A673 (cell line): ENCODE measurements at regions of chr12 and their contacts with region 1.

Region 1: GRCh38 chr12:31406345-31406744 is 80.4 kb upstream of the SINHCAF start:
- DNase-seq: no peak
- H3K4me3 ChIP-seq: no peak overlapping the region
- H3K27ac ChIP-seq: no peak overlapping the region
- H3K4me1 ChIP-seq: no peaks in the 10 kb centered on the region
- H3K27me3 ChIP-seq: no peaks in the 10 kb centered on the region
- CTCF ChIP-seq: no peak

Region 2: GRCh38 chr12:30985814-30986452 is 420.4 kb before region 1 on chr12:
- CTCF ChIA-PET with region 1: no interaction called
- POLR2A ChIA-PET with region 1: no interaction called
- intact Hi-C with region 1: no loop called
- DNase-seq: peak; percentile 73
- H3K4me3 ChIP-seq: no peak overlapping the region
- H3K27ac ChIP-seq: no peak overlapping the region
- H3K4me1 ChIP-seq: no peaks in the 10 kb centered on the region
- H3K27me3 ChIP-seq: no peaks in the 10 kb centered on the region
- CTCF ChIP-seq: peak; percentile 85

Region 3: GRCh38 chr12:31245822-31246469 is 160.4 kb before region 1 on chr12:
- CTCF ChIA-PET with region 1: no interaction called
- POLR2A ChIA-PET with region 1: no interaction called
- intact Hi-C with region 1: loop called (anchors 10 kb)
- DNase-seq: no peak
- H3K4me3 ChIP-seq: no peak overlapping the region
- H3K27ac ChIP-seq: no peak overlapping the region
- H3K4me1 ChIP-seq: no peaks in the 10 kb centered on the region
- H3K27me3 ChIP-seq: no peaks in the 10 kb centered on the region
- CTCF ChIP-seq: 0 out of 2 replicates have a peak, but pooled peaks have one; percentile 17

Region 4: DNA sequence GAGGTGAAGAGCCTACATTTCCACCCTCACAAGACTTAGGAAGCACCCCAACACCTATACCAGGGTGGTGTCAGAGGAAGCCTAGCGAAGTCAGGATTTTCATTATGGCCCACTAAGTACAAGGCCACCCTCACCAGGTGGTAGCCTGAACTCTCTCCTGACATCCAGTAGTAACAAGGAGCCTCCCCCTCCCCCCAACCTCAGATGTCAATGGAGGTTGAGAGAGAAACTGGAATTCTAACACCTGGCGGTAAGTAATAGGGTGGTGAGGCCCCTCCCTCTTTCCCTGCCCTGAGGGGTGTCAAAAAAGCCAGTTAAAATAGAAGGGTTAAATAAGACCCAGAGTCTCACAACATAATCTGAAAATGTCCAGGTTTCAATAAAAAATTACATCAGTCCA is 118.0 kb before region 1 on chr12:
- CTCF ChIA-PET with region 1: no interaction called
- POLR2A ChIA-PET with region 1: no interaction called
- intact Hi-C with region 1: no loop called
- DNase-seq: no peak
- H3K4me3 ChIP-seq: no peak overlapping the region
- H3K27ac ChIP-seq: no peak overlapping the region
- H3K4me1 ChIP-seq: no peaks in the 10 kb centered on the region
- H3K27me3 ChIP-seq: no peaks in the 10 kb centered on the region
- CTCF ChIP-seq: no peak

Region 5: GRCh38 chr12:31522607-31523006 is 116.3 kb after region 1 on chr12:
- CTCF ChIA-PET with region 1: no interaction called
- POLR2A ChIA-PET with region 1: interaction called, 10 read pairs
- intact Hi-C with region 1: no loop called
- DNase-seq: no peak
- H3K4me3 ChIP-seq: no peak overlapping the region
- H3K27ac ChIP-seq: no peak overlapping the region
- H3K4me1 ChIP-seq: peaks cover 10% of the 10 kb centered on the region
- H3K27me3 ChIP-seq: no peaks in the 10 kb centered on the region
- CTCF ChIP-seq: no peak

Region 6: GRCh38 chr12:31599053-31599452 is 192.7 kb after region 1 on chr12:
- CTCF ChIA-PET with region 1: no interaction called
- POLR2A ChIA-PET with region 1: interaction called, 15 read pairs
- intact Hi-C with region 1: no loop called
- DNase-seq: no peak
- H3K4me3 ChIP-seq: no peak overlapping the region
- H3K27ac ChIP-seq: no peak overlapping the region
- H3K4me1 ChIP-seq: no peaks in the 10 kb centered on the region
- H3K27me3 ChIP-seq: no peaks in the 10 kb centered on the region
- CTCF ChIP-seq: no peak

Region 7: DNA sequence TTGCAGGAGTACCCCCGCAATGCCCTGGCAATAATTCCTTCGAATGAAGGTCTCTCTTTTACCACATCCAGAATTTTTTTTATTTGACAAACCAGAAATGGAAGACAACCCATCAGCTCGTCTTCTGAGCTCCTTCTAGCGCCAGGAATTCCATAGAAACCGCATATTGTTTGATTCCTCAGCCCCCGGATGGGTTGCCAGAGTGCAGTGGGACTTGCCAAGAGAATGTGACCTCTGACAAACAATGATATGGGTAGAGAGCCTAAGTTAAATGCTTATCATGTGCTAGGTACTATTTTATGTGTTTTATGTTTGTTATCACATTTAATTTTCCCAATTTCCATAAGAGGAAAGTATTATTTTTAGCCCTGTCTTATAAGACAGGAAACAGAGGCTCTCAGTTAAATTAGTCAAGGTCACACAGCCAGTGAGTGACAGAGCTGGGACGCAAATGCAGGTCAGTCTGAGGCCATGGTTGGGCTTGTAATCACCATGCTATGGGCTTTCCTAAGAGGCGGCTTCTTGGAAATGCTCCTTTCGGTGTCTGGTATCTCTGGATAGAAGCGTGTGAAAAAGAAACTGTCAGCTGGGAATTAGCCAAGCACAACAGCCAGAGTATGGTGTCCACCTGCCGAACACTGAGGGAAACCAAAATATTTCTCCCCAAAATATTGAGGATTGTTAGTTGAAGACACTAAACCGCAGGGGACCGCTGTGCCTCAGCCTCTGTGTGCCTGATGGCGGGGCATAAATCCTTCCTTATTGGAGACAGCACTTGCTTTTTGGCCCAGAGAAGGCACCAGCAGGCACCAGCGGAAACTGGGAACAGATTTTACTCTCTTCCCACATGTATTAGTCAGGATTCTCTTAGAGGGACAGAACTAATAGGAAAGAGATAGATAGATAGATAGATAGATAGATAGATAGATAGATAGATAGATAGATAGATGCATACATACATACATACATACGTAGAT is 223.7 kb after region 1 on chr12:
- CTCF ChIA-PET with region 1: interaction called, 27 read pairs
- POLR2A ChIA-PET with region 1: no interaction called
- intact Hi-C with region 1: no loop called
- DNase-seq: no peak
- H3K4me3 ChIP-seq: no peak overlapping the region
- H3K27ac ChIP-seq: no peak overlapping the region
- H3K4me1 ChIP-seq: no peaks in the 10 kb centered on the region
- H3K27me3 ChIP-seq: no peaks in the 10 kb centered on the region
- CTCF ChIP-seq: no peak

Region 8: GRCh38 chr12:32302218-32303173 is 896.2 kb after region 1 on chr12:
- CTCF ChIA-PET with region 1: no interaction called
- POLR2A ChIA-PET with region 1: no interaction called
- intact Hi-C with region 1: loop called (anchors 10 kb)
- DNase-seq: peak; percentile 49
- H3K4me3 ChIP-seq: no peak overlapping the region
- H3K27ac ChIP-seq: no peak overlapping the region
- H3K4me1 ChIP-seq: peaks cover 7% of the 10 kb centered on the region
- H3K27me3 ChIP-seq: no peaks in the 10 kb centered on the region
- CTCF ChIP-seq: peak; percentile 59